ENCODE measurements at regions of chr11 and their contacts with region 1.

Region 1: DNA sequence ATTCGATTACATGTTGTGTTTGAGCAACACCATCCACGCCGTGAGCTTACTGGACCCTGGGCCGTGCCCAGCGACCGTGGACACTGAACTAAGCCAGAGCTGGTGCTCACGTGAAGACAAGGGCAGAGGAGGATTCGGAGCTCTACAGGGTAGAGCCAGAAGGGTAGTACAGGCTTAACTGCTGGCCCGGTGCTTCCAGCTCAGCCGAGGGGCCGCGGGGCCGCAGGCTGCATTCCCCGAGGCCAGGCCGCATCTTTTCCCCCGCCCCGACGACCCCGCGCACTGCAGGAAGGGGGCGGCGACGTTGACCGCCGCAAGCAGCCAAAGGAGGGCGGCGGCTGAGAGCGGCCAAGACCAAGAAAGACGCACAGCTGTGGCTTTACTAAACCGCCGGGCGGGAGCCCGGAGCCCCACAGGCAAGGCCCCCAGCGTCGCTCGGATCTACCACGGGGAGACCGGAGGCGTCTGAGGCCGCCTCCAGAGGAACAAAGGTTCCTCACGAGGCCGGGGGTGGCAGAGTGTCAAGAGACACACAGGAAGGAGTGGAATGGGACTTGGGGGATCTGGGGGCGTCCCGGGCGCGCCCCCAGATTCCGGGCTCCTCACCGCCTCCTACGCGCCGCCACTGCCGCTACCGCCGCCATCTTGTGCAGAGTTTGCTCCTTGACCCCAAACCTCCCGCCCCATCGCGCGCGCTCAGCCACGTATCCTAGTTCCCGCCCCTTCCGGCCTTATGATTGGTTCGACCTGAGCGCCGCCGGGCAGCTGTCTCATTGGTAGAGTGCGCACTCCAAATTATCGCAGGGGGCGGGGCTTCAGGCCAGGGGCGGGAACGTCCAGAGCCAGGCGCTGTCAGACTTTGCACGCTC is at the start of gene GANAB:
- DNase-seq: peak; percentile 99
- H3K4me3 ChIP-seq: peak within 1 kb of the TSS; percentile 95
- H3K27ac ChIP-seq: peak within 1 kb of the TSS; percentile 76
- H3K4me1 ChIP-seq: peaks cover 20% of the 10 kb centered on the region
- CTCF ChIP-seq: no peak
- total RNA-seq, gene GANAB: 91.4 and 108 TPM in 2 replicates

Region 2: DNA sequence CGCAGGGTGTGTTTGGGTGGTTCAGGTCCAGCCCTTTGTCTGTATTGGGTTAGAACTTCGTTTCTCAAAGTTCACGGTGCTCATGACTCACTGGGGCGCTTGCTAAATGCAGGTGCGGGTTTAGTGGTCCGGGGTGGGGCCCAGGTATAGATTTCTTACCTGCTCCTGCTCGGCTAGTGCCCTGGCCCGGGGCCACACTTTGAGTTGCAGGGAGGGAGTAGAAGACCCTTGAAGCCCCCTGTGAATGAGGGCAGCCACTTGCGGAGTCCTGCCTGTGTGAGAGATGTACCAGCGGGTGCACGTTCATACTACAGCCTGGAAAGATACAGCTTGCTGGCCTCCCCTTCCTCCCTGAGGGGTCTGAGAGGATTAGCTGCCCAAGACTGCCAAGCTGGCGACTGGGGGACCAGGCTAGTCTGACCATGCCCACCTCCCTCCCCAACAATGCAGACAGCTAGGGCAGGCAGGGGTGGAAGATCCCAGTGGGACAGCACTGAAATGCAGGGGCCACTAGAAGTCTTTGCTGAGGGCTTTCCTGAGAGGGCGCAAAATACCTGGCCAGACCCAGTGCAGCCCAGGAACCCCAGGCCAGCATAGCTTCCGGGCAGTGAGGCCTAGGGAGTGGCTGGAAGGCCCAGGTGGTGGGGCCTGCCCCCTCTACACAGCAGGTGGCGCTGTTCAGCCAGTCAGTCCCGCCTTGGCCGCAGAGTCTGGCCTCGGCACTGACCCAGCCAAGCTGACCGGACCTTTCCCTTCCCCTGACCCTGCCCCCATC is 898.8 kb before region 1 on chr11:
- CTCF ChIA-PET with region 1: no interaction called
- POLR2A ChIA-PET with region 1: no interaction called
- intact Hi-C with region 1: no loop called
- DNase-seq: peak; percentile 53
- H3K4me3 ChIP-seq: no peak overlapping the region
- H3K27ac ChIP-seq: no peak overlapping the region
- H3K4me1 ChIP-seq: no peaks in the 10 kb centered on the region
- CTCF ChIP-seq: peak; percentile 90

Region 3: GRCh38 chr11:62427630-62428233 is 218.5 kb before region 1 on chr11:
- CTCF ChIA-PET with region 1: interaction called, 10 read pairs
- POLR2A ChIA-PET with region 1: no interaction called
- intact Hi-C with region 1: no loop called
- DNase-seq: no peak
- H3K4me3 ChIP-seq: no peak overlapping the region
- H3K27ac ChIP-seq: no peak overlapping the region
- H3K4me1 ChIP-seq: no peaks in the 10 kb centered on the region
- CTCF ChIP-seq: no peak

Region 4: DNA sequence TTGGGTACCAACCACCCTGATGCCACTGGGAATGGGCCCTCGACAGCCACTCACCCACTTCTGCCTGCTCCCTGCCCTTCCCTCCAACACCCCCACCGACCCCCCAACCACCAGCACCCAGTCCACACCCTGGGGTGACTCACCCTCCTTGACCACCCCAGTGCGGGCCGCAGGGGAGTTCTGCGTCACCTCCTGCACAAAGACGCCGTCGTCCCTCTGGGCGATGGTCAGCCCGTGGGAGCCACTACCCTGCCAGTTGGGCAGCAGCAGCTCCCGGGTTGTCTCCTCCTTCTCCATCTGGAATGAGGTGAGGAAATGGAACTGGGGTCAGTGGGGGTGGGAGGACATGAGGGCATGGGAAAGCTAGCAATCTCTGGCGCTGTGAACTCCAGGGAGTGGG is 110.4 kb before region 1 on chr11:
- CTCF ChIA-PET with region 1: no interaction called
- POLR2A ChIA-PET with region 1: no interaction called
- intact Hi-C with region 1: no loop called
- DNase-seq: no peak
- H3K4me3 ChIP-seq: no peak overlapping the region
- H3K27ac ChIP-seq: no peak overlapping the region
- H3K4me1 ChIP-seq: peaks cover 16% of the 10 kb centered on the region
- CTCF ChIP-seq: no peak

Region 5: DNA sequence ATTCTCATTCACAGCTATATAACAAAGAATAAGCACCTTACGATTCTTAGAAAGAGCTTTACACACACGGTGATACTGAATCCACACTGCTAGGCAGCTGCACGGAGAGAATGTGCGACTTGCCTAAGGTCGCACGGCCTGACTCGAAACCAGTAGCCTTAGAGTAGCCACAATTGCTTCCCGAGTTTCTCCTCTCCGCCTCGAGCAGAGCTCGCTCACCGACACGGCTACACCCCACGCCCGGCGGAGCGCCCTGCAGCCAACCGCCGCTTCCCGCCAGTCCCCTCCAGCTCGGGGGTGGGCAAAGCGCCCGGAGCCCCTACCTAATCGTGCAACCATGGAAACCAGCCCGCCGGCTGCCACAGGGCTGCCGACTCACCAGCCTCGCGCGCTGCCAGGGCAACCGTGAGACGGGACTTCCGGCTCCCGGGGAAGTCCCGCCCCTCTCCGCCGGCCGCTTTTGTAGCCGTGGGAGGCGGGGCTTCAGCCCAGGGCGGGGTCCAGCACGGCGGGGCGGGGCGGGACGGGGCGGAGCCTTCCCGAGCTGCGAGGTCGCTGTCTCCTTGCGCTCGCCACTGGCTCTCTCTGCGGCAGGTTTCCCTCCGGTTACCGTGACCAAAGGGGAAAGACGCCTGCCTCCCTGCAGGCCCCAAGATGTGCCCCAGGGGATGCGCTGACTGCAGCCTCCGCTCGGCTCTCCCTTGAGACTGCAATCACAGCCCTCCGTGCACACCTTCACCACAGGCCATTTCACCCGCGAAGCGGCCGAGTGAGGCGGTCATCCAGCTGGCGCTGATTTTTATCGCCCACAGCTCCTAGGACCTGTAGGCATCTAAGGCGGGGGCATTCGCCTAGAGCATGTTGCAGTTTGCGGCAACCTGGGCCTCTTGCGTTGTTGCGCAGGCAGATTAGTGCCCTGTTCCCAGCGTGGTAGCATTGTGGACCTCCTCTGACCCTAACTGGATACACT is 60.0 kb after region 1 on chr11:
- CTCF ChIA-PET with region 1: no interaction called
- POLR2A ChIA-PET with region 1: interaction called, 10 read pairs
- intact Hi-C with region 1: no loop called
- DNase-seq: peak; percentile 94
- H3K4me3 ChIP-seq: peak overlapping the region; percentile 73
- H3K27ac ChIP-seq: peak overlapping the region; percentile 19
- H3K4me1 ChIP-seq: peaks cover 44% of the 10 kb centered on the region
- CTCF ChIP-seq: no peak